ENCODE measurements at regions of chr3 and their contacts with region 1.

Region 1: DNA sequence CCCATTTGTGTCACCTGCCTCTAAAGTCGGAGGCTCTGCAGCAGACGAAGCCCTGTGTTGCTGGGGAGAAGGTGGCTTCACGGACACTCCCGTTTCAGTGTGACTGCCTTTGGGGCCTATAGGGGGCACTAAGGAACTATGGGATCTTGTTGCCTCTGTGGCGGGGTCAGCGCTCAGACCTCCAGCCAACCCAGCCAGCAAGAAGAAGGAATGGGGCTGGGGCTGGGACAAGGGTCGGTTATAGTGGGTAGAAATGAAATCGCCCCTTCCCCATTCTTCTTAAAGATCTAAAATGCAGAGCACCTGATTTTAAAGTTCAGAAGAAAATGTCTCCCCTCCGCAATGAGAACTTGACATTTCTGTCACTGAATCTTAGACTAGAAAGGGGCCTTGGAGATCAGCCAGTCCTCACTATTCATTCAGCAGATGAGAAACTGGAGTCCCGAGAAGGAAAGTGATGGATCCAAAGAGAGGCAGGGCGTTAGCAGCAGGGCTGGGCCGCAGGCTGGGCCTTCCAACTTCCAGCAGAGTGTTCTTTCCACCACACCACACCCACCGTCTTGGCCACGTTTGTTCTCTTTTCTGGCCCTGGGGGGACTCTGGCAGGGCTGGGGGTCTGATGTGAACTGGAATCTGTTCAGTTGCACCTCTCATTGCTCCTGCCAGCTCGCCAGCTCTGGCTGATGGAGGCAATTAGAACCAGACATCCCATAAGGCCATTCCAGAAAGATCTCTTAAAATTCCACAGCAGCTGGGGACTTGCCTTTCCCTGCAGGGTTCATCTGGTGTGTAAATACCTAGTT is 195.4 kb downstream of the OPA1 start:
- DNase-seq: peak; percentile 36
- ATAC-seq: peak; percentile 98
- H3K4me3 Mint-ChIP-seq: no peak overlapping the region
- H3K27ac Mint-ChIP-seq: peak overlapping the region; percentile 15
- H3K4me1 Mint-ChIP-seq: peaks cover 16% of the 10 kb centered on the region
- H3K27me3 Mint-ChIP-seq: peaks cover 25% of the 10 kb centered on the region
- CTCF ChIP-seq: peak; percentile 34

Region 2: GRCh38 chr3:193857996-193858395 is 69.6 kb after region 1 on chr3:
- CTCF ChIA-PET with region 1: no interaction called
- POLR2A ChIA-PET with region 1: no interaction called
- intact Hi-C with region 1: no loop called
- DNase-seq: no peak
- ATAC-seq: no peak
- H3K4me3 Mint-ChIP-seq: no peak overlapping the region
- H3K27ac Mint-ChIP-seq: no peak overlapping the region
- H3K4me1 Mint-ChIP-seq: no peaks in the 10 kb centered on the region
- H3K27me3 Mint-ChIP-seq: no peaks in the 10 kb centered on the region
- CTCF ChIP-seq: no peak

Region 3: DNA sequence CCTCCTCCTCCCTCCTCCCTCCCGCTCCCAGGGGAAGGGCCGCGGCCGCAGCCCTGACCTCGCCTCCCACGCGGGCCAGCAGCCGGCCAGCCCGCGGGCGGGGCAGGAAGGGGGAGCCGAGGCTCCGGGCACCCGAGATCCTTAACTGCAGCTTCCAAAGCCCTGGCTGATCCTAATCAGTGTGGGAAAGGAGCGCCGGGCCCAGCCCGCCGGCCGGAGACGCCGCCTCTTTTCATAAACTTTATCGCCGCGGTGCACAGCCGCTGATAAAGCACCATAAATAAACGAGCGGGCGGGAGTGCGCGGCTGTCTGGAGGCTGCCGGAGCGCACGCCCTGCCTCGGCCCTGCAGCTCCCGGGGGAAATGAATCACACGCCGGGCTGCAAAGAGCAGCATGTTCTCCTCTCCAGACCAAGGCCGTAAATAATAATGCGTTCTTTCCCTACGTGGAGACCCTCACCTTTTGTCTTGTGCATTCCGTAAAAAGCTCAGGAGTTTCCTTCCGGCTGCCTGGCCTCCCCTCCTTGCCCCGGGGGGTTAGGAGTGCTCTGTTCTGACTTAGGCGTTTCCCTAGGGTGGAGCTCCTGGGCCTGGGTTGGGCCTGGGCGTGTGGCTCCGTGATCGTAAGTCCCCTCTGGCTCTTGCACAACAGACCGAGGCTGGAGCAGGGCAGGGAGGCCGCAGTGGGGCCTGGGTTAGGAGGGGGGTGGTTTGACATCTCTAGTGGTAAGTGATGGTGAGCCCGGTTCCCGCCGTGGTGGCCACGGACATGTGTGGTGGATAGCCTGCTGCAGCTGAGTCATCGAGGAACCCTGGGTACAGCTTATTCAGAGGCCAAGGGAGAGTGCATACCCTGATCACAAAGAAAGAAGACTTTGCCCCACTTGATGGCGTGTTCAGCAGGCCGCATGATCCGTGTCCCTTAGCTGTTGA is 215.0 kb after region 1 on chr3:
- CTCF ChIA-PET with region 1: no interaction called
- POLR2A ChIA-PET with region 1: no interaction called
- intact Hi-C with region 1: loop called (anchors 1 kb)
- DNase-seq: peak; percentile 70
- ATAC-seq: peak; percentile 94
- H3K4me3 Mint-ChIP-seq: peak overlapping the region; percentile 76
- H3K27ac Mint-ChIP-seq: peak overlapping the region; percentile 65
- H3K4me1 Mint-ChIP-seq: peaks cover 40% of the 10 kb centered on the region
- H3K27me3 Mint-ChIP-seq: peaks cover 6% of the 10 kb centered on the region
- CTCF ChIP-seq: no peak

Region 4: GRCh38 chr3:194089357-194090177 is 301.2 kb after region 1 on chr3:
- CTCF ChIA-PET with region 1: no interaction called
- POLR2A ChIA-PET with region 1: no interaction called
- intact Hi-C with region 1: loop called (anchors 5 kb)
- DNase-seq: peak; percentile 41
- ATAC-seq: peak; percentile 86
- H3K4me3 Mint-ChIP-seq: peak overlapping the region; percentile 9
- H3K27ac Mint-ChIP-seq: peak overlapping the region; percentile 71
- H3K4me1 Mint-ChIP-seq: peaks cover 43% of the 10 kb centered on the region
- H3K27me3 Mint-ChIP-seq: no peaks in the 10 kb centered on the region
- CTCF ChIP-seq: no peak

Measured in activated B cell treated with CpG ODN at 0.5 μM for 24 hours (primary cell).